ENCODE measurements at regions of chr16 and their contacts with region 1.

Region 1: DNA sequence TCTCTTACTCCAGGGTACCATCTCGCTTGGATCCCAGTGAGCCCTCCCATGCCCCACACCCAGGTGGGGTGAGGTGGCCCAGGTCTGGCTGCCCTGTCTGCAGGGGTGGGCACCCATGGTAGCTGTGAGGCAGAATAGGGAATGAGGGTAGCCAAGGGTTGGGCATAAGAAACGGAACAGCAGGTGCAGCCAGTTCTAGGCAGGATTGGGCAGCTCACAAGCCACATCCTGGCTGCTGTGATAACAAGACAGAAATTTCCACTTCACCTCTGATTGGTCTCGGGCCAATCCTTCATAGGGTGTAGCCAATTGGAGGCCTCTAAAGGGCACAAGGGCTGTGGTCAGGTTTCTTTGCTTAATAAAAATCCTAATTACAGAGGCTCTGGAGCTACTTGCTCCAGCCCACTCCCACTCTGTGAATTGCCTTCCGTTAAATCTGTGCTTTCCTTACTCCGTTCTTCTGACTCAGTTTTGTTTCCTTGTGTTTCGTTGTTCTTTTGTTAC is 1.5 kb upstream of the ARHGDIG start:
- DNase-seq: peak in 2 of 10 donors; percentile 39 to 76
- H3K4me3 ChIP-seq: no peak overlapping the region
- H3K27ac ChIP-seq: peak overlapping the region in 4 of 59 donors; percentile 30 to 90 (median 73)
- H3K27me3 ChIP-seq: peaks cover 0 to 12% (median 0%) of the 10 kb centered on the region in 45 donors
- CTCF ChIP-seq: no peak

Region 2: GRCh38 chr16:346587-346986 is 67.7 kb after region 1 on chr16:
- intact Hi-C with region 1: loop called in 1 of 2 experiments (anchors 5 kb)
- DNase-seq: no peak
- H3K4me3 ChIP-seq: no peak overlapping the region
- H3K27ac ChIP-seq: no peak overlapping the region
- H3K27me3 ChIP-seq: no peaks in the 10 kb centered on the region
- CTCF ChIP-seq: no peak

Region 3: GRCh38 chr16:938136-938795 is 659.4 kb after region 1 on chr16:
- intact Hi-C with region 1: no loop called
- DNase-seq: no peak
- H3K4me3 ChIP-seq: no peak overlapping the region
- H3K27ac ChIP-seq: peak overlapping the region in 32 of 59 donors; percentile 2 to 85 (median 52)
- H3K27me3 ChIP-seq: no peaks in the 10 kb centered on the region
- CTCF ChIP-seq: no peak

Measured in dorsolateral prefrontal cortex (tissue), 120 donors.